CD8-positive, alpha-beta T cell (primary cell): ENCODE measurements at regions of chr17 and their contacts with region 1.

Region 1: GRCh38 chr17:79749156-79749815 is 18.5 kb downstream of the ENPP7 start:
- DNase-seq: no peak
- ATAC-seq: no peak
- H3K4me3 ChIP-seq: no peak overlapping the region
- H3K4me3 Mint-ChIP-seq: no peak overlapping the region
- H3K27ac ChIP-seq: no peak overlapping the region
- H3K27ac Mint-ChIP-seq: no peak overlapping the region
- H3K4me1 ChIP-seq: peaks cover 24% of the 10 kb centered on the region
- H3K4me1 Mint-ChIP-seq: peaks cover 17% of the 10 kb centered on the region
- H3K27me3 ChIP-seq: peaks cover 20 to 31% of the 10 kb centered on the region in 2 experiments
- H3K27me3 Mint-ChIP-seq: peaks cover 46% of the 10 kb centered on the region
- CTCF ChIP-seq: no peak

Region 2: DNA sequence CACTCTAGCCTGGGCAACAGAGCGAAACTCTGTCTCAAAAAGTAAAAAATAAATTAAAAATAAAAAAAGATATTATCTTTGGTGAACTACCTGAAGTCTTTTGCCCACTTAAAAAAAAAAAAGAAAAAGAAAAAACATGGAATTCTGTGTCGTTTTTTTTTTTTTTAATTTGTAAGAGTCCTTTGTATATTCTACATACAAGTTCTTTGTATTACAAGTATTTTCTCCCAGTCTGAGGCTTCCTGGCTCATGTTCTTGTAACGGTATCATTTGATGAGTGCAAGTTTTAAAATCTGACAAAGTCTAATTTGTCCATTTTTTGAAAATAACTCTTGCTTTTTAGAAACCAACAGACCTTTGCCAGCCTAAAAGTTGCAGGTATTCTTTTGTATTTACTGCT is 16.4 kb after region 1 on chr17:
- CTCF ChIA-PET with region 1: no interaction called
- POLR2A ChIA-PET with region 1: no interaction called
- intact Hi-C with region 1: no loop called
- DNase-seq: no peak
- ATAC-seq: no peak
- H3K4me3 ChIP-seq: no peak overlapping the region
- H3K4me3 Mint-ChIP-seq: no peak overlapping the region
- H3K27ac ChIP-seq: no peak overlapping the region
- H3K27ac Mint-ChIP-seq: no peak overlapping the region
- H3K4me1 ChIP-seq: no peaks in the 10 kb centered on the region
- H3K4me1 Mint-ChIP-seq: no peaks in the 10 kb centered on the region
- H3K27me3 ChIP-seq: no peaks in the 10 kb centered on the region
- H3K27me3 Mint-ChIP-seq: peaks cover 17% of the 10 kb centered on the region
- CTCF ChIP-seq: no peak

Region 3: GRCh38 chr17:79777894-79778503 is 28.7 kb after region 1 on chr17 and contains the start of gene CBX2:
- CTCF ChIA-PET with region 1: interaction called, 5 read pairs
- POLR2A ChIA-PET with region 1: no interaction called
- intact Hi-C with region 1: loop called (anchors 2 kb)
- DNase-seq: peak; percentile 60 to 89 (median 75)
- ATAC-seq: peak; percentile 86
- H3K4me3 ChIP-seq: peak within 1 kb of the TSS; percentile 36 to 44
- H3K4me3 Mint-ChIP-seq: peak within 1 kb of the TSS; percentile 83
- H3K27ac ChIP-seq: no peak within 1 kb of the TSS
- H3K27ac Mint-ChIP-seq: no peak within 1 kb of the TSS
- H3K4me1 ChIP-seq: peaks cover 34% of the 10 kb centered on the region
- H3K4me1 Mint-ChIP-seq: peaks cover 34% of the 10 kb centered on the region
- H3K27me3 ChIP-seq: peaks cover 20 to 21% of the 10 kb centered on the region in 2 experiments
- H3K27me3 Mint-ChIP-seq: peaks cover 45% of the 10 kb centered on the region
- CTCF ChIP-seq: no peak
- total RNA-seq, gene CBX2: 0.14 to 0.56 TPM

Region 4: DNA sequence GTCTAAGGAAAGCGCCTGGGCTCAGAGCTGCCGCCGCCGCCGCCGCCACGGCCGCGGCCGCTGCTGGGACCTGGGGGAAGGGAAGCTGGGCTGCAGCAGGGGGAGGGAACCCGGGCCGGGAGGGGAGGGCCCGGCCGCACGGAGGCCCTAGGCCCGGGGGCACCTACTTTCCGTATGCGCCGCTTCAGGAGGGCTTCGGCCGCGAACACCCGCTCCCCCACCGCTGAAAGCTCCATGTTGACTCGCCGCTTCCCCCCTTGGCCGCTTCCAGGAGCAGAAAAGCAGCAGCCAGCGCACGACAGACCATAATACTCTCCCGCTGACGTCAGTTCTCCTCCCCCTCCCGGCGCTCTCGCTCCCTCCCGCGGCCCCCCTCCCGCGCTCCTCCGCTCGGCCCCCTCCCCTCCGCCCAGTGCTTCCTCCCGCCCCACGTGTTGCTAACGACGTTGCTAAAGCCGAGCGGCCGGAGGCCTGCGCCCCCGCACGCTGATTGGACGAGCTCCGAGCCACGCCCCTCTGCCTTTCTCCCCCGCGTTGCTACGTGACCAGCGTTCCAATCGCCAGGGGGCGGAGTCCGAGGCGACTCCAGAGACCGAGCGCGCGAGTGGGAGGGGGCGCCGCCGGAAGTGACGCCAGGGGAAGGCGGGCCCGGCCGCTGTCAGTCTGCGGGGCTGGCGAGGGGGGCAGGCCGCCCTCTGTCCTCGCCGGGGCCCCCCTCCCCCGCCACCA is 47.6 kb after region 1 on chr17 and contains the start of gene CBX8:
- CTCF ChIA-PET with region 1: interaction called, 3 read pairs
- POLR2A ChIA-PET with region 1: no interaction called
- intact Hi-C with region 1: loop called in 1 of 2 experiments (anchors 5 kb)
- DNase-seq: peak; percentile 98 to 100 (median 99)
- ATAC-seq: peak; percentile 87
- H3K4me3 ChIP-seq: peak within 1 kb of the TSS; percentile 51 to 68
- H3K4me3 Mint-ChIP-seq: peak within 1 kb of the TSS; percentile 86
- H3K27ac ChIP-seq: peak within 1 kb of the TSS; percentile 60 to 72
- H3K27ac Mint-ChIP-seq: peak within 1 kb of the TSS; percentile 91
- H3K4me1 ChIP-seq: peaks cover 48% of the 10 kb centered on the region
- H3K4me1 Mint-ChIP-seq: peaks cover 38% of the 10 kb centered on the region
- H3K27me3 ChIP-seq: peaks cover 47 to 48% of the 10 kb centered on the region in 2 experiments
- H3K27me3 Mint-ChIP-seq: peaks cover 37% of the 10 kb centered on the region
- CTCF ChIP-seq: no peak
- total RNA-seq, gene CBX8: 3.7 to 4.0 TPM

Region 5: DNA sequence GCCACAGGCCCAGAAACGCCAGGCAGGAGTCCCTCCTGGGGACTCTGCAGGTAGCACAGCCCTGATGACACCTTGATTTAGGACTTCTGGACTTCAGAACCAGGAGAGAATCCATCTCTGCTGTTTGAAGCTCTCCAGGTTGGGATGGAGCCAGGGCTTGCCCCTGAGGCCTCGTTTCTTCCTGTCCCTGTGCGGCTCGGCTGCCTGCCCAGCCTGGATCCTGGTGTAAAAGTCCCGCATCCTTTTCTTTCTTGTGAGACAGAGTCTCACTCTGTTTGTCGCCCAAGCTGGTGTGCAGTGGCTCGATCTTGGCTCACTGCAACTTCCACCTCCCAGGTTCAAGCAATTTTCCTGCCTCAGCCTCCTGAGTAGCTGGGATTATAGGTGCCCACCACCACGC is 107.8 kb after region 1 on chr17:
- CTCF ChIA-PET with region 1: no interaction called
- POLR2A ChIA-PET with region 1: no interaction called
- intact Hi-C with region 1: no loop called
- DNase-seq: no peak
- ATAC-seq: no peak
- H3K4me3 ChIP-seq: no peak overlapping the region
- H3K4me3 Mint-ChIP-seq: no peak overlapping the region
- H3K27ac ChIP-seq: no peak overlapping the region
- H3K27ac Mint-ChIP-seq: no peak overlapping the region
- H3K4me1 ChIP-seq: no peaks in the 10 kb centered on the region
- H3K4me1 Mint-ChIP-seq: peaks cover 5% of the 10 kb centered on the region
- H3K27me3 ChIP-seq: no peaks in the 10 kb centered on the region
- H3K27me3 Mint-ChIP-seq: peaks cover 12% of the 10 kb centered on the region
- CTCF ChIP-seq: no peak

Region 6: GRCh38 chr17:79915850-79916430 is 166.7 kb after region 1 on chr17:
- CTCF ChIA-PET with region 1: interaction called, 6 read pairs
- POLR2A ChIA-PET with region 1: no interaction called
- intact Hi-C with region 1: loop called in 1 of 2 experiments (anchors 1 kb)
- DNase-seq: peak in 3 of 9 experiments; percentile 15 to 42 (median 33)
- ATAC-seq: no peak
- H3K4me3 ChIP-seq: no peak overlapping the region
- H3K4me3 Mint-ChIP-seq: no peak overlapping the region
- H3K27ac ChIP-seq: no peak overlapping the region
- H3K27ac Mint-ChIP-seq: no peak overlapping the region
- H3K4me1 ChIP-seq: no peaks in the 10 kb centered on the region
- H3K4me1 Mint-ChIP-seq: no peaks in the 10 kb centered on the region
- H3K27me3 ChIP-seq: no peaks in the 10 kb centered on the region
- H3K27me3 Mint-ChIP-seq: peaks cover 12% of the 10 kb centered on the region
- CTCF ChIP-seq: no peak

Region 7: GRCh38 chr17:79991140-79991923 is 242.0 kb after region 1 on chr17:
- CTCF ChIA-PET with region 1: interaction called, 9 read pairs
- POLR2A ChIA-PET with region 1: no interaction called
- intact Hi-C with region 1: loop called (anchors 1 kb)
- DNase-seq: peak; percentile 70 to 91 (median 86)
- ATAC-seq: peak; percentile 93
- H3K4me3 ChIP-seq: peak overlapping the region; percentile 69 to 71
- H3K4me3 Mint-ChIP-seq: peak overlapping the region; percentile 80
- H3K27ac ChIP-seq: peak overlapping the region in 1 of 2 experiments; percentile 30
- H3K27ac Mint-ChIP-seq: no peak overlapping the region
- H3K4me1 ChIP-seq: peaks cover 36% of the 10 kb centered on the region
- H3K4me1 Mint-ChIP-seq: peaks cover 41% of the 10 kb centered on the region
- H3K27me3 ChIP-seq: peaks cover 0 to 9% of the 10 kb centered on the region in 2 experiments
- H3K27me3 Mint-ChIP-seq: no peaks in the 10 kb centered on the region
- CTCF ChIP-seq: peak; percentile 61